CD8-positive, alpha-beta T cell (primary cell): ENCODE measurements at regions of chr19 and their contacts with region 1.

Region 1: GRCh38 chr19:57578487-57579205 is at the start of gene ZNF416:
- DNase-seq: peak; percentile 91 to 99 (median 94)
- ATAC-seq: peak; percentile 95
- H3K4me3 ChIP-seq: peak within 1 kb of the TSS; percentile 74 to 84
- H3K4me3 Mint-ChIP-seq: peak within 1 kb of the TSS; percentile 85
- H3K27ac ChIP-seq: peak within 1 kb of the TSS; percentile 55 to 65
- H3K27ac Mint-ChIP-seq: peak within 1 kb of the TSS; percentile 81
- H3K4me1 ChIP-seq: peaks cover 25% of the 10 kb centered on the region
- H3K4me1 Mint-ChIP-seq: peaks cover 25% of the 10 kb centered on the region
- H3K27me3 ChIP-seq: no peaks in the 10 kb centered on the region
- H3K27me3 Mint-ChIP-seq: no peaks in the 10 kb centered on the region
- CTCF ChIP-seq: no peak
- total RNA-seq, gene ZNF416: 7.7 to 8.2 TPM

Region 2: DNA sequence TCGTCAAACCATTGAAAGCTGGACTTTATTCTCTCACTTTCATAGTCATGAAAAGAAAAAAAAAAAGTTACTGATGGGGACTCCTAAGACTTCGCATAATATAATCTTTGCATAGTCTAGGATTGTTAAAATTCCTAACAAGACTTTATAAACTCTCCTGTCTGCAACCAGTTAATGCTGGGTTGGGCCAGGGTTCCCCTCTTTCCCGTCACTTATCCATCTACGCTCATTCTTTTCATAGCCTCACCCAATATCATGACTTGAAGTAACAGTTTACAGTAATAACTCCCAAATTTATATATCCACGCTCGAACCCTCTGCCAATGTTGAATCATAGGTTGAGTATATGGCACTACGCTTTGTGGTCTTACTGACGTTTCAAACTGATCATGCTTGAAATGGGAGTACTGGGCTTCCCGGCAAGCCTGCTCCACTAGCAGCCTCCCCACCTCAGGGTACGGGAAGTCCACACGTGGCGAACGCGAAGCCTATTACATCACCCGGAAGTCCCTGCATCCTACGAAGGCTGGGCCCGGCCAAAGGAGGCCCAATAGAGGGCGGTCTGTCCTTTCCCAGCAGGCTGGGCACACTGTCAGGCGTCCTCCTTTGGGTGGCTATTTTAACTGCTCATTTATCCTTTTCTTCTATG is 299.1 kb before region 1 on chr19:
- CTCF ChIA-PET with region 1: no interaction called
- POLR2A ChIA-PET with region 1: interaction called, 4 read pairs
- intact Hi-C with region 1: loop called in 1 of 2 experiments (anchors 2 kb)
- DNase-seq: peak; percentile 55 to 94 (median 75)
- ATAC-seq: peak; percentile 64
- H3K4me3 ChIP-seq: peak overlapping the region; percentile 54 to 99
- H3K4me3 Mint-ChIP-seq: no peak overlapping the region
- H3K27ac ChIP-seq: peak overlapping the region; percentile 86 to 93
- H3K27ac Mint-ChIP-seq: no peak overlapping the region
- H3K4me1 ChIP-seq: peaks cover 28% of the 10 kb centered on the region
- H3K4me1 Mint-ChIP-seq: peaks cover 33% of the 10 kb centered on the region
- H3K27me3 ChIP-seq: no peaks in the 10 kb centered on the region
- H3K27me3 Mint-ChIP-seq: no peaks in the 10 kb centered on the region
- CTCF ChIP-seq: no peak

Region 3: DNA sequence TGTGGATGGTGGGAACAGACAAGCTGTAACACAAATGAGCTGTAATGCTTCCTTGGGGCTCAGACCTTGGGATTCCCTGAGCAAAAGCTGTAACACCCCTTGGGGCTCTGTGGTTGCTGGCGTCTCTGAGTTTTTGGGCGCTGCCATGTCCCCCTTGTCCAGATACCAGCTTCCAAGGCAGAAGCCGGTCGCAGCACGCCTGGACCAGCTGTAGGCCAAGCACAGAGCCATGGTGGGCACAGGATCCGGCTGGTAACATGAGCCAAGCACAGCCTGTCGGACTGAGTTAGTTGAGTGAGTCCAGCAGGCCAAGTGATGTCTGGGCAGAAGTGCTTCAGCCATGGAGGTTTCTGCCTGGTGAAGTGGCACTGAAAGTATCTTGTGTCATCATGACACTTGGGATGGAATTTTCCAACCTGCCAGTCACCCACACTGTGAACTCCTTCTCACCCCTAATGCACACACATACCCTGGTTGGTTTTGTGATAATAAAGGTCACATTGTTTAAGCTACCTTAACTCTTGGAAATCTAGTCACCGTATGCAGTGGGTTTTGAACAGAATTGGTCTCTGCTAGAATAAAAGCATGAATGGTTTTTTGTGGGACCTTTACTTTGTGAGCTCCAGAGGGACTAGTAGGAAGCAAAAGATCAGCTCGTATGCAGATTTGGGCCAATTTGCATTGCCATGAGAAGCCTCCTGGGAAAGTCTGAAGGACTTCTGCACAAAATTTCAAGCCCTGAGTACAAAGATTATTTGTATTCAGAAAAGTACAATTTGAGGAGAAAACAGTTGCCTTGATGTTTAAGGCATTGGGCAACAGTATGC is 174.7 kb before region 1 on chr19:
- CTCF ChIA-PET with region 1: no interaction called
- POLR2A ChIA-PET with region 1: no interaction called
- intact Hi-C with region 1: no loop called
- DNase-seq: no peak
- ATAC-seq: no peak
- H3K4me3 ChIP-seq: no peak overlapping the region
- H3K4me3 Mint-ChIP-seq: no peak overlapping the region
- H3K27ac ChIP-seq: no peak overlapping the region
- H3K27ac Mint-ChIP-seq: no peak overlapping the region
- H3K4me1 ChIP-seq: no peaks in the 10 kb centered on the region
- H3K4me1 Mint-ChIP-seq: peaks cover 2% of the 10 kb centered on the region
- H3K27me3 ChIP-seq: no peaks in the 10 kb centered on the region
- H3K27me3 Mint-ChIP-seq: no peaks in the 10 kb centered on the region
- CTCF ChIP-seq: no peak

Region 4: DNA sequence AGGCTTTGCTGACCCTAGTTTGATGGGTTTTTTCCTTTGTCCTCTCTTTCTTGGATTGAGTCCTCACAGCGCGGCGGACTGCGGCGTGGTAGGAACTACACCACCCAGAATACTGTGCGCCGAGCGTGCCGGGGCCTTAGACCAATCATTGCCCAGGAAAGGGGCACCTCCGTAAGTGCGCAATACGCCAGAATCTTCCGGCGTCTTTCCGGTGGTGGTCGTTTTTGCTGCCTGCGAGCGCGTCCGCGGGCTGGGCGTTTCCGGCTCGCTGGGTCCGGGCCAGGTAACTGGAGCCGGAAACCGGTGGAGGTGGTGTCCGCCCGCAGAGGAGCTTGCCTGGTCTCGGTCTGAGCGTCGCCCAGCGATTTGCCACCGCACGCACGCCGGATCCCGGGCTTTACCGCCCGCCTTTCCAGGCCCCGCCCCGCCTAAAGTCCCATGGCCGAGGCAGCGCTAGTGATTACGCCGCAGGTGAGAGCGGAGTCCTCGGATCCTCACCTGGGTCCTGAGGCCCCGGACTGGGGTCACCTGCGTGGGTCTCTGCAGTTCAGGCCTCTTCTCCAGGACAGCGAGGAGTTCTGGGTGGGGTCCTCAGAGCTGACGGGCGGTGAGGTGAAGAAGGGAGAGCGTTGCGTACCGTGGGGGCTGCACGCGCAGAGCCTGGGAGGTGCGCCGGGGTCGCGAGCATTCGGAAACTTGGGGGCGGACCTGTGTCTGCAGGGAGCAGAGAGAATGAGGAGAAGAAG is 51.3 kb before region 1 on chr19 and contains the start of gene ZNF549:
- CTCF ChIA-PET with region 1: no interaction called
- POLR2A ChIA-PET with region 1: interaction called, 4 read pairs
- intact Hi-C with region 1: loop called (anchors 1 kb)
- DNase-seq: peak; percentile 77 to 95 (median 89)
- ATAC-seq: peak; percentile 98
- H3K4me3 ChIP-seq: peak within 1 kb of the TSS; percentile 97
- H3K4me3 Mint-ChIP-seq: peak within 1 kb of the TSS; percentile 94
- H3K27ac ChIP-seq: peak within 1 kb of the TSS; percentile 80 to 88
- H3K27ac Mint-ChIP-seq: peak within 1 kb of the TSS; percentile 96
- H3K4me1 ChIP-seq: peaks cover 16% of the 10 kb centered on the region
- H3K4me1 Mint-ChIP-seq: peaks cover 32% of the 10 kb centered on the region
- H3K27me3 ChIP-seq: no peaks in the 10 kb centered on the region
- H3K27me3 Mint-ChIP-seq: no peaks in the 10 kb centered on the region
- CTCF ChIP-seq: no peak
- total RNA-seq, gene ZNF549: 14.6 to 17.1 TPM

Region 5: DNA sequence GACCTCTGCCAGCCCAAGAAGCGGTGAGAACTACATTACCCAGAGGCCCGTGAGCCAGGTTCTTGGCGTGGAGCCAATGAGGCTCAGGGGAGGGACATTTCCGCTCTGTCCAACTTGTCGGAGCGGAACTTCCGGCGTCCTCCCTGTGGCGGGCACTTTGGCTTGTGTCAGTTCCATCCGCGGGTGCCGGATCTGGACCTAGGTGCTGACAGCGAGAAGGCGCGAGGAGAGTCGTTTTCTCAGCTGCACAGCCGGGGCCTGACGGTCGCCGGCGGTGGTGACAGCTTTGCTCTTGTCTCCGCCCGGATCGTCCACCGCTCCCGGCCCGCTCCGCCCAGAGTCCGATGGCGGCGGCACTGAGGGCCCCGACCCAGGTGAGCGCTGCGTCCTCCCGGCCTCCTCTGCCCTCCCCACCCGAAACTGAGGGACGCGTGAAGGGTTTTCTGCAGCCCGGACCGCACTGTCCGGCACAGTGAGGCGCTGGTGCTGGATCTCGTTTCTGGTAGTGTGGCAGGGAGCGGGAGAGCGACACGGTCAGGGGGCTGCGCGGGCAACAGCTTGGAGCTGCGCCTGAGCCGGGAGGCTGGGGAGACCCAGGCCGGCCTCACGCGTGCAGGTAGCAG is 21.2 kb after region 1 on chr19 and contains the start of gene ZNF530:
- CTCF ChIA-PET with region 1: no interaction called
- POLR2A ChIA-PET with region 1: interaction called, 5 read pairs
- intact Hi-C with region 1: loop called in 1 of 2 experiments (anchors 1 kb)
- DNase-seq: peak; percentile 61 to 93 (median 88)
- ATAC-seq: peak; percentile 86
- H3K4me3 ChIP-seq: peak within 1 kb of the TSS; percentile 67 to 81
- H3K4me3 Mint-ChIP-seq: peak within 1 kb of the TSS; percentile 88
- H3K27ac ChIP-seq: peak within 1 kb of the TSS; percentile 16 to 51
- H3K27ac Mint-ChIP-seq: peak within 1 kb of the TSS; percentile 33
- H3K4me1 ChIP-seq: peaks cover 13% of the 10 kb centered on the region
- H3K4me1 Mint-ChIP-seq: peaks cover 25% of the 10 kb centered on the region
- H3K27me3 ChIP-seq: no peaks in the 10 kb centered on the region
- H3K27me3 Mint-ChIP-seq: no peaks in the 10 kb centered on the region
- CTCF ChIP-seq: no peak
- total RNA-seq, gene ZNF530: 3.6 to 4.2 TPM

Region 6: GRCh38 chr19:57682226-57682766 is 103.7 kb after region 1 on chr19:
- CTCF ChIA-PET with region 1: interaction called, 3 read pairs
- POLR2A ChIA-PET with region 1: no interaction called
- intact Hi-C with region 1: loop called (anchors 1 kb)
- DNase-seq: no peak
- ATAC-seq: no peak
- H3K4me3 ChIP-seq: peak overlapping the region; percentile 91 to 94
- H3K4me3 Mint-ChIP-seq: peak overlapping the region; percentile 98
- H3K27ac ChIP-seq: peak overlapping the region; percentile 69 to 71
- H3K27ac Mint-ChIP-seq: peak overlapping the region; percentile 97
- H3K4me1 ChIP-seq: peaks cover 19% of the 10 kb centered on the region
- H3K4me1 Mint-ChIP-seq: peaks cover 36% of the 10 kb centered on the region
- H3K27me3 ChIP-seq: peaks cover 0 to 2% of the 10 kb centered on the region in 2 experiments
- H3K27me3 Mint-ChIP-seq: peaks cover 7% of the 10 kb centered on the region
- CTCF ChIP-seq: no peak

Region 7: DNA sequence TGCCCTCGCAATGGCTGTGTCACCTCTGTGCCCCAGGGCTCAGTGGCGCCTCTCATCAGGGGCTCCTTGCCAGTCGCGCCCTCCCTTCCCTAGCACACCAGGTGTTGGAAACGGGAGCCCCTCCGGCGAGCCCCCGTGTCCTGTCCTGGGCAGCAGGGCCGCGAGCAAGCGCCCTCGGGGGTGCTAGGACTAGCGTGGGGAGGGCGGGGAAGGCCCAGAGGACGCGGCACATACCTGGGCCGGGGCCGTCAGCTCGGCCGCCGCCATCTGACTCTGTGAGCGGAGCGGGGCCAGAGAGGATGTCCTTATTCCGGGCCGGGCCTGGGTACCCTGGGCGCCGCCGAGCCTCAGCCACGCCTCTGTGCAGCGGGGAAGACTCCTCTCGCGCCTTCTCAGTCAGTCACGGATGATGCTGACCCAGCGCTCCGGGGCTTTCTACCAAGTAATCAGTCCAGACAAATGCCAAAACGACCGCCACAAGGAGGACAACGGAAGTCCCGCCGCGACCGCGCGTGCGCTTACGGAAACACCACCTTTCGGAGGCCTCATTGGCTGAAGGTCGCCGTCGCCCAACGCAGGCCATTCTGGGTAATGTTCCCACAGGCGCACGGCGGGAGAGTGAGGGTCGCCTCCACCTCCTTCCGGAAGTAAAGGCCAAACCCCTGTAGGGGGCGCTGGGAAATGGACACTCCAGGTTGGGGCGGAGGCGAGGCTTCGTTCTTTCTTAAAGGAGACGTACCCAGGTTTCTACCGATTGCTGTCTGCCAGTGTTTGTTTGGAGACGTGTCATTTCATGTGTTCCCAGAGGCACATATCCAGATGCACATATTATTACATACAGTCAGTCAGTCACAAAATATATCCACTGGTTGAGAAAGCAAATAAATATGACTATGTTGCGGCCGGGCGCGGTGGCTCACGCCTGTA is 368.8 kb after region 1 on chr19 and contains the start of gene ZNF256:
- CTCF ChIA-PET with region 1: no interaction called
- POLR2A ChIA-PET with region 1: no interaction called
- intact Hi-C with region 1: loop called in 1 of 2 experiments (anchors 1 kb)
- DNase-seq: peak; percentile 72 to 92 (median 86)
- ATAC-seq: peak; percentile 91
- H3K4me3 ChIP-seq: peak within 1 kb of the TSS; percentile 93 to 97
- H3K4me3 Mint-ChIP-seq: peak within 1 kb of the TSS; percentile 93
- H3K27ac ChIP-seq: peak within 1 kb of the TSS; percentile 76 to 90
- H3K27ac Mint-ChIP-seq: peak within 1 kb of the TSS; percentile 95
- H3K4me1 ChIP-seq: peaks cover 16% of the 10 kb centered on the region
- H3K4me1 Mint-ChIP-seq: peaks cover 20% of the 10 kb centered on the region
- H3K27me3 ChIP-seq: no peaks in the 10 kb centered on the region
- H3K27me3 Mint-ChIP-seq: no peaks in the 10 kb centered on the region
- CTCF ChIP-seq: peak; percentile 44
- total RNA-seq, gene ZNF256: 18.3 to 21.0 TPM